WTC11 (cell line): ENCODE measurements at regions of chr20 and their contacts with region 1.

Region 1: GRCh38 chr20:36399147-36399968 is 93.2 kb downstream of the DLGAP4 start:
- DNase-seq: peak; percentile 96
- ATAC-seq: peak; percentile 96
- H3K4me3 Mint-ChIP-seq: no peak overlapping the region
- H3K27ac Mint-ChIP-seq: peak overlapping the region; percentile 69; the same call in 1 of the 2 replicates
- H3K4me1 Mint-ChIP-seq: peaks cover 18% of the 10 kb centered on the region
- H3K27me3 Mint-ChIP-seq: no peaks in the 10 kb centered on the region
- CTCF ChIP-seq: peak; percentile 63

Region 2: DNA sequence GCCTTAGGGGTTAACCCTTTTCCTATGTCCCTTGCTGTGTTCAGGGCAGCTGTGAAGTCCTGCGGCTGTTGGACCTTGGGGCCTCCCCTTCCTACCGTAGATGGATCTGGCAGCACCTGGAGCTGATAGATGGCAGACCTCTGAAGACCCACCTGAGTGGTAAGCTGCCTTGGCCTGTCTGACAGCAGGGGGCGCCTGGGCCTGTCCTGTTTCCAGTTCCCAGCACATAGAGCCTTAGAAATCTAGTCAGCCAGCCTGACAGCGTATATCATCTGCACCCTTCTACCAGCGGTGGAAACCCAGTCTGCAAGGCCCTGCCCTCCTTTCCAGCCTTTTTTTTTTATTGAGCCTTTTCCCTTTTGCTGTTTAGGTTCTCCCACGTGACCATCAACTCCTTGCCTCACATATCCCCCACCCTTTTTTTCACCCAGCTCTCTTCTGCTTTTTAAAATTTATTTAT is 404.3 kb before region 1 on chr20:
- CTCF ChIA-PET with region 1: interaction called, 10 read pairs
- POLR2A ChIA-PET with region 1: no interaction called
- DNase-seq: peak; percentile 94
- ATAC-seq: peak; percentile 97
- H3K4me3 Mint-ChIP-seq: no peak overlapping the region
- H3K27ac Mint-ChIP-seq: no peak overlapping the region
- H3K4me1 Mint-ChIP-seq: peaks cover 10% of the 10 kb centered on the region
- H3K27me3 Mint-ChIP-seq: no peaks in the 10 kb centered on the region
- CTCF ChIP-seq: peak; percentile 71

Region 3: DNA sequence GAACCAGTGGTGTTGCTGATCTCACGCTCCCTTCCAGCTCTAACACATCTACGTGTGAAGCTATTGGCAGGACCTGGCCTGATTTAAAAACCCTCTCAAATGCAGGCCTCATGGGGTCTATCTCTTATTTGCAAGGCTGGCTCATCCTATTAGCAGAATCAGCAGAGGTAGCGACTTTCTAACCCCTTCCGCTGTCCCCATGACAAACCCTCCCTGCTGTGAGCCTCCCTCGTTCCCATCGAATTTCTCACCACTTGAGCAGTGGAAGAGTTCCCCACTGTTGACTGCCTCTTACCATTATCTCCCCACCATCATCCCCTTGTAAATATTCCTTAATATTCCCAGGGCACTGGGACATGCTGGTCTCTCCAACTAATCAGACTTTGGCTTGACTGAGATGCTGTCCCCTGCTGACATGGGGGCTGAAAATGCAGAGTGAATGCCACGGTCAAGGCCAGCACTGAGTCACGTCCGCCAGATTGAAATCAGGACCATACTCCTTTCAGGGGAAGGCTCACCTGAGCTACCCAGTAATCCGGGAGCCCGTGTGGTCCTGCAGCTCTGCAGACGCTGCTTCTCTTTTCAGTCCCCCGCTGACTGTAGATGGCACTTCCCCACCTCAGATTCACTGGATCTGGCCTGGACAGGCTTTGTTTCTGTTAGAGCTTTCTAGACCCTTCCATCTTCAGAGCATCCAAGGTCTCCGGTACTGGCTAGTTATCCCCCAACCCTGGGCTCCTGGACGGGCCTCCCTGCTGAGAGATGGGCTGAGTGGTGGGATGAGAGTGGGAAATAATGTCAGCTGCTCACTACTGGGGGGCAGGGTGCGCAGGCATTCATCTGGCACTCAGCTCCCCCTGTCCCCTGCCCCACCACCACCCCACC is 139.9 kb before region 1 on chr20:
- CTCF ChIA-PET with region 1: interaction called, 18 read pairs
- POLR2A ChIA-PET with region 1: interaction called, 3 read pairs
- DNase-seq: no peak
- ATAC-seq: peak; percentile 60
- H3K4me3 Mint-ChIP-seq: no peak overlapping the region
- H3K27ac Mint-ChIP-seq: peak overlapping the region; percentile 42
- H3K4me1 Mint-ChIP-seq: peaks cover 15% of the 10 kb centered on the region
- H3K27me3 Mint-ChIP-seq: no peaks in the 10 kb centered on the region
- CTCF ChIP-seq: no peak

Region 4: DNA sequence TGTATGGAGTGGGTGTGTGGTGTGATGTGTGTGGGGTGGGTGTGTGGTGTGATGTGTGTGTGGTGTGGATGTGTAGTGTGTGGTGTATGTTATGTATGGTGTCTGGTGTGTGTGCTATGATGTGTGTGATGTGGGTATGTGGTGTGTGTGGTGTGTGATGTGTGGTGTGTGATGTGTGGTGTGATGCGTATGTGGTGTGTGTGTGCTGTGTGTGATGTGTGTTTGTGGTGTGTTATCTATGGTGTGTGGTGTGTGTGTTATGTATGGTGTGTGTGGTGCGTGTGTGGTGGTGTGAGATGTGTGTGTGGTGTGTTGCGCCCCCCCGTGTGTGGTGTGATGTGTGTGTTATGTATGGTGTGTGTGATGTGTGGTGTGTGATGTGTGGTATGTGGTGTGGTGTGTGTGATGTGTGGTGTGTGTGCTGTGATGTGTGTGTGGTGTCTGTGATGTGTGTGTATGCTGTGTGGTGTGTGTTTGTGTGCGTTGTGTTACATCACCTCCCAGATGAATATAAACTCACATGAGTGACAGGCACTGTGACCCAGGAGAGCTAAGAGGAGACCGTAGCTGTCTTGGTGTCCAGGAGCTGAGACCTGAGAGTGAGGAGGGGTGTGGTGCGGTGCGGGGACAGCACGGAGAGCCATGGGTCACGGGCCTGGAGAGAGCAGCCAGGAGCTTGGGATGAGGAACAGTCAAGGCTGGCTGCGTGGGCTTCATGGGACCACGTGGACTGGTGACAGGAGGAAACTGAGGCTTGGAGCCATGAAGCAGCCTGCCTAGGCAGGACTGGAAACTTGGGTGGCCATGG is 84.4 kb before region 1 on chr20:
- CTCF ChIA-PET with region 1: interaction called, 17 read pairs
- POLR2A ChIA-PET with region 1: no interaction called
- DNase-seq: peak; percentile 11
- ATAC-seq: no peak
- H3K4me3 Mint-ChIP-seq: no peak overlapping the region
- H3K27ac Mint-ChIP-seq: no peak overlapping the region
- H3K4me1 Mint-ChIP-seq: no peaks in the 10 kb centered on the region
- H3K27me3 Mint-ChIP-seq: no peaks in the 10 kb centered on the region; the same call in 1 of the 2 replicates
- CTCF ChIP-seq: no peak

Region 5: GRCh38 chr20:36367907-36368799 is 31.2 kb before region 1 on chr20:
- CTCF ChIA-PET with region 1: interaction called, 17 read pairs
- POLR2A ChIA-PET with region 1: no interaction called
- DNase-seq: no peak
- ATAC-seq: peak; percentile 58
- H3K4me3 Mint-ChIP-seq: no peak overlapping the region
- H3K27ac Mint-ChIP-seq: no peak overlapping the region; the same call in 1 of the 2 replicates
- H3K4me1 Mint-ChIP-seq: peaks cover 14% of the 10 kb centered on the region
- H3K27me3 Mint-ChIP-seq: no peaks in the 10 kb centered on the region; the same call in 1 of the 2 replicates
- CTCF ChIP-seq: no peak

Region 6: GRCh38 chr20:36439040-36439730 is 39.8 kb after region 1 on chr20:
- CTCF ChIA-PET with region 1: interaction called, 51 read pairs
- POLR2A ChIA-PET with region 1: no interaction called
- DNase-seq: peak; percentile 93
- ATAC-seq: peak; percentile 66
- H3K4me3 Mint-ChIP-seq: no peak overlapping the region
- H3K27ac Mint-ChIP-seq: no peak overlapping the region
- H3K4me1 Mint-ChIP-seq: peaks cover 4% of the 10 kb centered on the region
- H3K27me3 Mint-ChIP-seq: peaks cover 19% of the 10 kb centered on the region
- CTCF ChIP-seq: peak; percentile 91